ENCODE measurements at regions of chr2 and their contacts with region 1.

Region 1: DNA sequence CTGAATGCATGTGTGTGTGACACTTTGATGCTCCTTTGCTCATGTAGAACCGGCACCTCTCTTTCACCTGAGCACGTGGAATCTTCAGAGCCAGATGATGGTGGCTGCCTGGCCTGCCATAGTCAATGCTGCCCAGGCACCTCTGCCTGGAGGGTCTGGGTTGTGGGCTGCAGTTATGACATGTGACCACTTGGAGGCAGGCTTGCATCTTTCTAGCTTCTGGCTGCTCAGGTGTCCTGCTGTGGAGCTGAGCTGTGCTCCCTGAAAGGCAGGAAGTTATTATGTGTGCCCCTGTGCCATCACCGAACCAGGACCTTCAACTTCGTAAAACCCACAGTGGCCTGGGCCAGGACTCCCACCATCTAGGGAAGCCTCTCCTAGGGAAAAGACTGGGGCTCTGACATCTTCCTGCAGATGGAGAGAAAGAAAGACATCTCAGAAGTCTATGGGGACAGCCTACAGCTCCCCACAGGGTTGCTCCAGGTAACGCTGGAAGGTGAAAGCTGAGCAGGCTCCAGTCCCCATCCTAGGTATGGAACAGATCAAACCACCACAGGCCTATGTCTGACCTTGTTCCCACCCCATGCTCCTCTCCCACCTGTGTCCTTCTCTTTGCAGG is 30.2 kb downstream of the PSD4 start:
- DNase-seq: peak; percentile 68
- ATAC-seq: peak; percentile 83
- H3K4me3 ChIP-seq: no peak overlapping the region
- H3K27ac ChIP-seq: no peak overlapping the region
- H3K4me1 ChIP-seq: peaks cover 4% of the 10 kb centered on the region
- H3K27me3 ChIP-seq: peaks cover 2% of the 10 kb centered on the region; the same call in 1 of the 2 replicates
- CTCF ChIP-seq: peak; percentile 88
- POLR2A ChIP-seq: no peak
- RAD21 ChIP-seq: peak; percentile 92

Region 2: GRCh38 chr2:113370478-113371091 is 166.6 kb after region 1 on chr2:
- CTCF ChIA-PET with region 1: interaction called, 7 read pairs
- POLR2A ChIA-PET with region 1: no interaction called
- dilution Hi-C with region 1: no loop called
- in situ Hi-C with region 1: no loop called
- intact Hi-C with region 1: loop called (anchors 1 kb)
- DNase-seq: peak; percentile 72
- ATAC-seq: peak; percentile 98
- H3K4me3 ChIP-seq: no peak overlapping the region
- H3K27ac ChIP-seq: no peak overlapping the region
- H3K4me1 ChIP-seq: no peaks in the 10 kb centered on the region
- H3K27me3 ChIP-seq: peaks cover 15% of the 10 kb centered on the region
- CTCF ChIP-seq: peak; percentile 82
- POLR2A ChIP-seq: no peak
- RAD21 ChIP-seq: peak; percentile 91

Region 3: GRCh38 chr2:113390124-113390849 is 186.3 kb after region 1 on chr2:
- CTCF ChIA-PET with region 1: interaction called, 10 read pairs
- POLR2A ChIA-PET with region 1: no interaction called
- dilution Hi-C with region 1: no loop called
- in situ Hi-C with region 1: no loop called
- intact Hi-C with region 1: loop called (anchors 5 kb)
- DNase-seq: peak; percentile 79
- ATAC-seq: peak; percentile 99
- H3K4me3 ChIP-seq: peak overlapping the region; percentile 16; the same call in 1 of the 2 replicates
- H3K27ac ChIP-seq: no peak overlapping the region
- H3K4me1 ChIP-seq: no peaks in the 10 kb centered on the region
- H3K27me3 ChIP-seq: peaks cover 8% of the 10 kb centered on the region
- CTCF ChIP-seq: peak; percentile 99
- POLR2A ChIP-seq: no peak
- RAD21 ChIP-seq: peak; percentile 80